GM10248 (cell line): ENCODE measurements at regions of chr10 and their contacts with region 1.

Region 1: GRCh38 chr10:71812016-71812912 is 38.8 kb downstream of the PSAP start:
- DNase-seq: peak; percentile 87
- CTCF ChIP-seq: peak; percentile 92

Region 2: GRCh38 chr10:71319042-71319799 is 493.0 kb before region 1 on chr10 and contains the start of gene SLC29A3:
- CTCF ChIA-PET with region 1: interaction called, 16 read pairs
- POLR2A ChIA-PET with region 1: no interaction called
- DNase-seq: peak; percentile 94
- CTCF ChIP-seq: peak; percentile 84

Region 3: DNA sequence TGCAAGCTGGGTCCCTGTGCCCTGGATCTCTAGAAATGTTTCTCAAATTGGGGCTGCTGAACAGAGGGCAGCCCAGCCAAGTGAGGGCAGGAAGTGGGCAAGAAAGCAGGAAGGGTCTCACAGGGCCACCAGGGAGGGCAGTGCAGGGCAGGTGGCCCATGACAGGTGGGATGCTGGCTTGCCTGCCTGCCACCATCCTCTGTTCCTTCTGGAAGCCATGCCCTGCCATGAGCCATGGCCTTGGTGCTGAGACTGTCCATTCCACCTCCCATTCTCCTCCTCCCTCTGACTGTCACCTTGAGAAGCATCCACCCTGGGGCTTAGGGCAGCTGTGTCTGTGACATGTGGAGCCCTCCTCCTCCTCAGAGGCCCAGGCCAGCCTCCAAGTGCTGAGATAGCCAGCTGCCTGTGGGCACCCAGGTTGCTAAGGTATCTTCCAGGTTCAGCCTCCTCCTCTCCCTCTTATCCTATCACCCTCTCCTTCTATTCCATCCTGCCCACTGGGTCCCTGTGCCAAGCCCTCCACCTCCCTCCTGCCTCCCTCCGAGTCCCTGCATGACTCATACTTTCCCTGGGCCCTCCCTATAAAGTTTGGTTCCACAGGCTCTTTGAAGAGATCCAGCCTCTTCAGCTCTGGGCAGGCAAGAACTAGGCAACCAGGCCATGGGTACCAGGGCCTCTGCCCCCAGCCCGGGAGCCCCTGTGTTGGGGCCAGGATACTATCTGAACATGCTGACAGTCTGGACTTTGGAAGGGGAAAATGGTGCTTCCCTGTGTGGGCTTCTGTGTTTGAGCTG is 40.2 kb before region 1 on chr10:
- CTCF ChIA-PET with region 1: interaction called, 14 read pairs
- POLR2A ChIA-PET with region 1: no interaction called
- DNase-seq: no peak
- CTCF ChIP-seq: no peak

Region 4: GRCh38 chr10:71795248-71795647 is 17.0 kb before region 1 on chr10:
- CTCF ChIA-PET with region 1: interaction called, 17 read pairs
- POLR2A ChIA-PET with region 1: no interaction called
- DNase-seq: peak; percentile 50
- CTCF ChIP-seq: no peak

Region 5: DNA sequence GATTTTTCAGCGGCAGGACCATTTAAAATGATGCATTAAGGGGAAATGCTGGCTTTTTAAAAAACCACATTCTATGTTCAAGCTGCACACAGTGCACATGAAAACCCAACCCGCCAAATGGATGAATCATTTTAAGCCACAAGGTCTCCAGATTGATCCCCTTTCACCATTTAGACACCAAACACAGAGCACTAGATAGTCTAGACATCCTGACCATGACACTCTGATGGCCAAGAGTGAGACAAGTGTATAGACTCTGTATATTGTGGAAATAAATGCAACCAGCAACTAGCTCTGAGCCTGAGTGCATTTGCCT is 10.1 kb after region 1 on chr10:
- CTCF ChIA-PET with region 1: interaction called, 22 read pairs
- POLR2A ChIA-PET with region 1: interaction called, 3 read pairs
- DNase-seq: no peak
- CTCF ChIP-seq: no peak

Region 6: GRCh38 chr10:71985542-71986250 is 173.4 kb after region 1 on chr10:
- CTCF ChIA-PET with region 1: no interaction called
- POLR2A ChIA-PET with region 1: no interaction called
- DNase-seq: peak; percentile 59
- CTCF ChIP-seq: no peak

Region 7: DNA sequence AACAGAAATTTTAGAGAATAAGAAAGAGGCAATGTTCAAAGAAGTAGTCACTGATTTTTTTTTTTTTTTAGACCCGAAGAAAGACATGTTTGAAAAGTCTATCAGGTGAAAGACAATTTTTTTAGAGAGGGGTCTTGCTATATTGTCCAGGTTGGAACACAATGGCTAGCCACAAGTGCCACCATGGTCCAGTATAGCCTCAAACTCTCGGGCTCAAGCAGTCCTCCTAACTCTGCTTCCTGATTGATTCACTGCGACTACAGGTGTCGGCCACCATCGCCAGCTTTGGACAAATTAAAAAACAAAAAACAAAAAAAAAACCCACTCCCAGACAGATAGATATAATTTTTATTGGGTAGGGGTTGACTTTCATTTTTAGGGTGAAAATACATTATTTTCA is 1377.9 kb after region 1 on chr10:
- CTCF ChIA-PET with region 1: no interaction called
- POLR2A ChIA-PET with region 1: interaction called, 14 read pairs
- DNase-seq: no peak
- CTCF ChIP-seq: no peak